B cell (primary cell): ENCODE measurements at regions of chr9 and their contacts with region 1.

Region 1: GRCh38 chr9:133375724-133376654 is at the starts of genes STKLD1 and SURF4:
- DNase-seq: peak; percentile 95
- ATAC-seq: peak; percentile 97
- H3K4me3 ChIP-seq: peak within 1 kb of the TSS; percentile 39 to 78 (median 66)
- H3K4me3 Mint-ChIP-seq: peak within 1 kb of the TSS; percentile 94
- H3K27ac ChIP-seq: peak within 1 kb of the TSS; percentile 18 to 91
- H3K27ac Mint-ChIP-seq: peak within 1 kb of the TSS; percentile 84
- H3K4me1 ChIP-seq: peaks cover 25 to 40% of the 10 kb centered on the region in 2 donors
- H3K4me1 Mint-ChIP-seq: peaks cover 33% of the 10 kb centered on the region
- H3K27me3 ChIP-seq: no peaks in the 10 kb centered on the region
- H3K27me3 Mint-ChIP-seq: no peaks in the 10 kb centered on the region
- CTCF ChIP-seq: no peak
- total RNA-seq, gene STKLD1: 1.1 and 2.7 TPM in 2 replicates
- total RNA-seq, gene SURF4: 43.8 and 44.1 TPM in 2 replicates

Region 2: GRCh38 chr9:133130685-133131244 is 245.2 kb before region 1 on chr9:
- CTCF ChIA-PET with region 1: no interaction called
- POLR2A ChIA-PET with region 1: no interaction called
- intact Hi-C with region 1: no loop called
- DNase-seq: peak; percentile 66
- ATAC-seq: peak; percentile 60
- H3K4me3 ChIP-seq: peak overlapping the region in 2 of 5 experiments; percentile 23 to 34
- H3K4me3 Mint-ChIP-seq: peak overlapping the region; percentile 65
- H3K27ac ChIP-seq: peak overlapping the region; percentile 71 to 95
- H3K27ac Mint-ChIP-seq: peak overlapping the region; percentile 100
- H3K4me1 ChIP-seq: peaks cover 39 to 72% of the 10 kb centered on the region in 2 donors
- H3K4me1 Mint-ChIP-seq: peaks cover 69% of the 10 kb centered on the region
- H3K27me3 ChIP-seq: no peaks in the 10 kb centered on the region
- H3K27me3 Mint-ChIP-seq: no peaks in the 10 kb centered on the region
- CTCF ChIP-seq: no peak

Region 3: GRCh38 chr9:133320421-133320881 is 55.5 kb before region 1 on chr9:
- CTCF ChIA-PET with region 1: no interaction called
- POLR2A ChIA-PET with region 1: no interaction called
- intact Hi-C with region 1: no loop called
- DNase-seq: no peak
- ATAC-seq: no peak
- H3K4me3 ChIP-seq: no peak overlapping the region
- H3K4me3 Mint-ChIP-seq: no peak overlapping the region
- H3K27ac ChIP-seq: no peak overlapping the region
- H3K27ac Mint-ChIP-seq: no peak overlapping the region
- H3K4me1 ChIP-seq: no peaks in the 10 kb centered on the region
- H3K4me1 Mint-ChIP-seq: no peaks in the 10 kb centered on the region
- H3K27me3 ChIP-seq: no peaks in the 10 kb centered on the region
- H3K27me3 Mint-ChIP-seq: peaks cover 7% of the 10 kb centered on the region
- CTCF ChIP-seq: no peak

Region 4: GRCh38 chr9:133335878-133336811 is 39.8 kb before region 1 on chr9 and contains the start of gene SURF6:
- CTCF ChIA-PET with region 1: no interaction called
- POLR2A ChIA-PET with region 1: interaction called, 3 read pairs
- intact Hi-C with region 1: loop called (anchors 1 kb)
- DNase-seq: peak; percentile 94
- ATAC-seq: peak; percentile 92
- H3K4me3 ChIP-seq: peak within 1 kb of the TSS; percentile 49 to 90 (median 82)
- H3K4me3 Mint-ChIP-seq: peak within 1 kb of the TSS; percentile 99
- H3K27ac ChIP-seq: peak within 1 kb of the TSS; percentile 76 to 78
- H3K27ac Mint-ChIP-seq: peak within 1 kb of the TSS; percentile 95
- H3K4me1 ChIP-seq: peaks cover 30 to 50% of the 10 kb centered on the region in 2 donors
- H3K4me1 Mint-ChIP-seq: peaks cover 53% of the 10 kb centered on the region
- H3K27me3 ChIP-seq: no peaks in the 10 kb centered on the region
- H3K27me3 Mint-ChIP-seq: no peaks in the 10 kb centered on the region
- CTCF ChIP-seq: no peak
- total RNA-seq, gene SURF6: 24.8 and 25.9 TPM in 2 replicates

Region 5: GRCh38 chr9:133356391-133357091 is 19.4 kb before region 1 on chr9 and contains the starts of genes SURF1 and SURF2:
- CTCF ChIA-PET with region 1: interaction called, 11 read pairs
- POLR2A ChIA-PET with region 1: interaction called, 6 read pairs
- intact Hi-C with region 1: loop called (anchors 1 kb)
- DNase-seq: peak; percentile 88
- ATAC-seq: peak; percentile 88
- H3K4me3 ChIP-seq: peak within 1 kb of the TSS; percentile 39 to 91 (median 75)
- H3K4me3 Mint-ChIP-seq: peak within 1 kb of the TSS; percentile 89
- H3K27ac ChIP-seq: peak within 1 kb of the TSS; percentile 55 to 90
- H3K27ac Mint-ChIP-seq: peak within 1 kb of the TSS; percentile 83
- H3K4me1 ChIP-seq: peaks cover 16 to 29% of the 10 kb centered on the region in 2 donors
- H3K4me1 Mint-ChIP-seq: peaks cover 32% of the 10 kb centered on the region
- H3K27me3 ChIP-seq: no peaks in the 10 kb centered on the region
- H3K27me3 Mint-ChIP-seq: no peaks in the 10 kb centered on the region
- CTCF ChIP-seq: peak; percentile 33
- total RNA-seq, gene SURF1: 44.1 and 56.2 TPM in 2 replicates
- total RNA-seq, gene SURF2: 16.9 and 17.1 TPM in 2 replicates

Region 6: GRCh38 chr9:133417541-133418461 is 41.8 kb after region 1 on chr9 and contains the start of gene REXO4:
- CTCF ChIA-PET with region 1: interaction called, 3 read pairs
- POLR2A ChIA-PET with region 1: no interaction called
- intact Hi-C with region 1: loop called (anchors 2 kb)
- DNase-seq: peak; percentile 92
- ATAC-seq: peak; percentile 78
- H3K4me3 ChIP-seq: peak within 1 kb of the TSS; percentile 74 to 87 (median 81)
- H3K4me3 Mint-ChIP-seq: peak within 1 kb of the TSS; percentile 89
- H3K27ac ChIP-seq: peak within 1 kb of the TSS; percentile 79 to 92
- H3K27ac Mint-ChIP-seq: peak within 1 kb of the TSS; percentile 93
- H3K4me1 ChIP-seq: peaks cover 30 to 63% of the 10 kb centered on the region in 2 donors
- H3K4me1 Mint-ChIP-seq: peaks cover 68% of the 10 kb centered on the region
- H3K27me3 ChIP-seq: no peaks in the 10 kb centered on the region
- H3K27me3 Mint-ChIP-seq: no peaks in the 10 kb centered on the region
- CTCF ChIP-seq: no peak
- total RNA-seq, gene REXO4: 37.1 and 39.9 TPM in 2 replicates

Region 7: DNA sequence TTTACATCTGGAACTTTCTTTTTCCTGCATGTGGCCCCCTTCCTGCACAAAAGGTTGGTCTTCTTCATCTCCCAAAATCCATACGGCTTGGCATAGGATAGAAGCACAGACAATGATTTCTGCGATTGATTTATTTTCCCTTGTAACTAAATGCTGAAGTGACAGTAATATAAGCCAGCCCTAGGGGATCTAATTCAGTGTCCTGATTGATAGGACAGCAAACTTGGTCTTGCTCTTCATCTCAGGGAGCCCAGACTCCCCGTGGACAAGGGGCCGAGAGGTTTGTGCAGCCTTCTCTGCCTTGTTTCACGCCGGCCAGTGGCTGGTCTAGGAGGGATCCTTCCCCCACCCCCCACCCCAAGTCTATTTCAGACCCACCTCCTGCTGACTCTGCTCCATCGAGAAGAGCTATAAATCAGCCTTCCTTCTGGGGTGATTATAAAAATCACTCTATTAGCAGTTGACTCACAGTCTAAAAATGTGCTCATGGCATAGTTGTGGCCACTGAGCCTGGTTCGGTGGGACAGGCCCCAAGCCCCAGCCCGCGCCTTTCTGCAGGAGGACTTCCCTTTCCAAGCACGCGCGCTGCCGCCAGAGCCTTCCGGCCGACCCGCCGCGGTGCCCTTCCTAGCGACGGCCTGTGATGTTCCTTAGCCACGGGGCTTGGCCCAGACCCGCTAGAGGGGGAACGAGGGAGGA is 1175.8 kb after region 1 on chr9:
- CTCF ChIA-PET with region 1: no interaction called
- POLR2A ChIA-PET with region 1: no interaction called
- intact Hi-C with region 1: no loop called
- DNase-seq: no peak
- ATAC-seq: no peak
- H3K4me3 ChIP-seq: no peak overlapping the region
- H3K4me3 Mint-ChIP-seq: no peak overlapping the region
- H3K27ac ChIP-seq: no peak overlapping the region
- H3K27ac Mint-ChIP-seq: no peak overlapping the region
- H3K4me1 ChIP-seq: no peaks in the 10 kb centered on the region
- H3K4me1 Mint-ChIP-seq: no peaks in the 10 kb centered on the region
- H3K27me3 ChIP-seq: peaks cover 0 to 13% (median 1%) of the 10 kb centered on the region in 4 experiments
- H3K27me3 Mint-ChIP-seq: peaks cover 15% of the 10 kb centered on the region
- CTCF ChIP-seq: no peak